B cell (primary cell): ENCODE measurements at regions of chr19 and their contacts with region 1.

Region 1: GRCh38 chr19:23758187-23759074 is at the start of gene ZNF681:
- DNase-seq: peak; percentile 87
- ATAC-seq: peak; percentile 83
- H3K4me3 ChIP-seq: peak within 1 kb of the TSS; percentile 77 to 99 (median 88)
- H3K4me3 Mint-ChIP-seq: peak within 1 kb of the TSS; percentile 97
- H3K27ac ChIP-seq: peak within 1 kb of the TSS; percentile 85 to 93
- H3K27ac Mint-ChIP-seq: peak within 1 kb of the TSS; percentile 94
- H3K4me1 ChIP-seq: peaks cover 3 to 22% of the 10 kb centered on the region in 2 donors
- H3K4me1 Mint-ChIP-seq: peaks cover 27% of the 10 kb centered on the region
- H3K27me3 ChIP-seq: no peaks in the 10 kb centered on the region
- H3K27me3 Mint-ChIP-seq: no peaks in the 10 kb centered on the region
- CTCF ChIP-seq: peak; percentile 47
- total RNA-seq, gene ZNF681: 6.2 and 8.5 TPM in 2 replicates

Region 2: GRCh38 chr19:23116802-23117571 is 641.4 kb before region 1 on chr19 and contains the start of gene ZNF730:
- CTCF ChIA-PET with region 1: no interaction called
- POLR2A ChIA-PET with region 1: no interaction called
- intact Hi-C with region 1: loop called (anchors 10 kb)
- DNase-seq: peak; percentile 68
- ATAC-seq: peak; percentile 98
- H3K4me3 ChIP-seq: peak within 1 kb of the TSS; percentile 50 to 71 (median 62)
- H3K4me3 Mint-ChIP-seq: peak within 1 kb of the TSS; percentile 88
- H3K27ac ChIP-seq: peak within 1 kb of the TSS in 1 of 2 donors; percentile 55
- H3K27ac Mint-ChIP-seq: peak within 1 kb of the TSS; percentile 57
- H3K4me1 ChIP-seq: peaks cover 0 to 11% of the 10 kb centered on the region in 2 donors
- H3K4me1 Mint-ChIP-seq: peaks cover 16% of the 10 kb centered on the region
- H3K27me3 ChIP-seq: no peaks in the 10 kb centered on the region
- H3K27me3 Mint-ChIP-seq: no peaks in the 10 kb centered on the region
- CTCF ChIP-seq: no peak
- total RNA-seq, gene ZNF730: 0.78 and 0.86 TPM in 2 replicates

Region 3: GRCh38 chr19:23686621-23687423 is 71.6 kb before region 1 on chr19 and contains the start of gene ZNF675:
- CTCF ChIA-PET with region 1: interaction called, 7 read pairs
- POLR2A ChIA-PET with region 1: interaction called, 10 read pairs
- intact Hi-C with region 1: loop called (anchors 1 kb)
- DNase-seq: peak; percentile 93
- ATAC-seq: peak; percentile 96
- H3K4me3 ChIP-seq: peak within 1 kb of the TSS; percentile 70 to 93 (median 83)
- H3K4me3 Mint-ChIP-seq: peak within 1 kb of the TSS; percentile 98
- H3K27ac ChIP-seq: peak within 1 kb of the TSS; percentile 80 to 90
- H3K27ac Mint-ChIP-seq: peak within 1 kb of the TSS; percentile 98
- H3K4me1 ChIP-seq: peaks cover 13 to 18% of the 10 kb centered on the region in 2 donors
- H3K4me1 Mint-ChIP-seq: peaks cover 48% of the 10 kb centered on the region
- H3K27me3 ChIP-seq: no peaks in the 10 kb centered on the region
- H3K27me3 Mint-ChIP-seq: no peaks in the 10 kb centered on the region
- CTCF ChIP-seq: no peak
- total RNA-seq, gene ZNF675: 46.1 and 46.7 TPM in 2 replicates

Region 4: GRCh38 chr19:23810496-23810895 is 52.1 kb after region 1 on chr19:
- CTCF ChIA-PET with region 1: no interaction called
- POLR2A ChIA-PET with region 1: no interaction called
- intact Hi-C with region 1: no loop called
- DNase-seq: no peak
- ATAC-seq: no peak
- H3K4me3 ChIP-seq: no peak overlapping the region
- H3K4me3 Mint-ChIP-seq: no peak overlapping the region
- H3K27ac ChIP-seq: no peak overlapping the region
- H3K27ac Mint-ChIP-seq: no peak overlapping the region
- H3K4me1 ChIP-seq: no peaks in the 10 kb centered on the region
- H3K4me1 Mint-ChIP-seq: no peaks in the 10 kb centered on the region
- H3K27me3 ChIP-seq: no peaks in the 10 kb centered on the region
- H3K27me3 Mint-ChIP-seq: no peaks in the 10 kb centered on the region
- CTCF ChIP-seq: no peak

Region 5: GRCh38 chr19:24033301-24033962 is 275.0 kb after region 1 on chr19:
- CTCF ChIA-PET with region 1: no interaction called
- POLR2A ChIA-PET with region 1: interaction called, 9 read pairs
- intact Hi-C with region 1: loop called (anchors 2 kb)
- DNase-seq: peak; percentile 84
- ATAC-seq: peak; percentile 98
- H3K4me3 ChIP-seq: peak overlapping the region; percentile 78 to 99 (median 93)
- H3K4me3 Mint-ChIP-seq: peak overlapping the region; percentile 99
- H3K27ac ChIP-seq: peak overlapping the region; percentile 85 to 89
- H3K27ac Mint-ChIP-seq: peak overlapping the region; percentile 98
- H3K4me1 ChIP-seq: peaks cover 24 to 56% of the 10 kb centered on the region in 2 donors
- H3K4me1 Mint-ChIP-seq: peaks cover 35% of the 10 kb centered on the region
- H3K27me3 ChIP-seq: no peaks in the 10 kb centered on the region
- H3K27me3 Mint-ChIP-seq: no peaks in the 10 kb centered on the region
- CTCF ChIP-seq: no peak